ENCODE measurements at regions of chr2 and their contacts with region 1.

Region 1: GRCh38 chr2:180077295-180077906 is 70.3 kb upstream of the CWC22 start:
- DNase-seq: no peak
- ATAC-seq: no peak

Region 2: GRCh38 chr2:179850188-179850587 is 227.2 kb before region 1 on chr2:
- intact Hi-C with region 1: loop called (anchors 10 kb)
- DNase-seq: no peak
- ATAC-seq: no peak